Activated B cell treated with CpG ODN at 0.5 μM for 24 hours (primary cell): ENCODE measurements at regions of chr1 and their contacts with region 1.

Region 1: DNA sequence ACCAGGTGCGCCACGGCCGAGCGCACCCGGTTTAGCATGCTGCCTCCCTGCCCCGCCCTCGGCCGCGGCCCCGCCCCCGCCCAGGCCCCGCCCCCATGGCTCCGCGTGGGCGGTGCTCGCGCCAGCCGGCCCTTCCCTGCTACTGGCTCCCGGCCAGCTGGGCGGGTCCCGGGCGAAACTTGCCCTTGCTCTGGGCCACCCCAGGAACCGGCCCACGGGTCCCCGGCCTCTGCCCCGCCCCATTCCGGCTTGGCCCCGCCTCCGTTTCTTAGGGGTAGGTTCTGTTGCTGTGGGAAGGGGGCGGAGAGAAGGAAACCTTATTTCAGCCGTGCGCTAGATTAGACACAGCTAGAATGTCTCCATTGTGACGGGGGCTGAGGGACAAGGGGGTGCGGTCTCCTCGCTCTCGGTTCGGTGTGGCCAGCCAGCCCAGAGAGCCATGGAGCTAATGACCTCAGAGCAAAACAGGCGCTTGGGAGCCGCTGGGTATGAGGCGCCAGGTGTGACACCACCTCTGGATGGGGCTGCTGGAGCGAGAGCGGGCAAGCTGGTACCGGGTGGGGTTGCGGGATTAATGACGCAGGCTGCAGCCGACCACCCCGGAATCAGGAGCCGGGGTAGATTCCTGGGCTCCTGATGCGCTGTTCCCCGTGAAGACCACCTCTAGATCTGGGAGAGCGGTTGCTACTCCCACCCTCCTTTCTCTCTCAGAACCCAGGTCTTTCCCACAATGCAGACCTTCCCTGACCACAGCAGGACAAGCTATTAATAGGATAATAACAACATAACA is at the start of gene PPM1J:
- DNase-seq: peak; percentile 99
- ATAC-seq: peak; percentile 88
- H3K4me3 Mint-ChIP-seq: peak within 1 kb of the TSS; percentile 84
- H3K27ac Mint-ChIP-seq: peak within 1 kb of the TSS; percentile 74
- H3K4me1 Mint-ChIP-seq: peaks cover 37% of the 10 kb centered on the region
- H3K27me3 Mint-ChIP-seq: peaks cover 5% of the 10 kb centered on the region
- CTCF ChIP-seq: no peak
- total RNA-seq, gene PPM1J: 0.46 and 0.75 TPM in 2 replicates

Region 2: DNA sequence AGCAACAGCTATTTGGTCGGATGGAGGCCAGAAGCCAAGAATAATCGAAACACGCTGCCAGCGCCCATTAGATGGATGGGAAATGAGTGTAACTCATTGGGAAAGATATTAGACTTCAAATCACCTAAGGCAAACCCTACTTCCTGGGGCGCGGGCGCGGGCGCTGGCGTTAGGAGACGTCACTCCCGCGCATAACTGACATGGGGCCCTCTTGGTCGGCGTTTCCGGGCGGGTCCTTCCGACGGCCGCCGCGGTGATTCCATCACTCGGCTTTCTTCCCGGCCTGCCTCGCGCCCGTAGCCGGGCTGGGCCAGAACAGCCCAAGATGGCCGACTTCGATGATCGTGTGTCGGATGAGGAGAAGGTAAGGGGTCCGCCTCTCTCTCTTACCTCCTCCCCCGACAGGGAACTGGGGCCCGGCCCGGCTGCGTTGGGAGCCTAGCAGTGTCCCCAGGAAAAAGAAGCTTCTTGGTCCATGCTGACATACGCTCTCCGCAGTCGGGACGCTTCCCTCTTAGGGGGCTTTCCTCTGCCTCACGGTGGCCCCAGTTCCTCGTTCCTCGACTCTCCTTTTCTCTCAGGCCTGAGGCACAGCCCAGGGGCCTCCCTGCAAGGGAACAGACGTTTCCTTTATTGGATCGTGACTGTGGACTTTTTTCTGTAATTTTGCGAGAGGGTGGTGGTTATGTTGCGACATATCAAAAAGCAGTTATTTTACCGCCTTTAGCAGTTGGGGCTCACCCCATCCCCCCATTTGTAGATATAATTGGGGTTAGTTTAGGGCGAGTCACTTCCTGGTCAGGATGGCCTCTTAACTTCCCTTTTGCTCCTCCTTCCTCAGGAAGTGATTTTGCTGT is 95.7 kb before region 1 on chr1 and contains the start of gene CAPZA1:
- CTCF ChIA-PET with region 1: interaction called, 4 read pairs
- POLR2A ChIA-PET with region 1: interaction called, 31 read pairs
- intact Hi-C with region 1: loop called (anchors 1 kb)
- DNase-seq: peak; percentile 82
- ATAC-seq: peak; percentile 83
- H3K4me3 Mint-ChIP-seq: peak within 1 kb of the TSS; percentile 97
- H3K27ac Mint-ChIP-seq: peak within 1 kb of the TSS; percentile 99
- H3K4me1 Mint-ChIP-seq: peaks cover 54% of the 10 kb centered on the region
- H3K27me3 Mint-ChIP-seq: no peaks in the 10 kb centered on the region
- CTCF ChIP-seq: no peak
- total RNA-seq, gene CAPZA1: 221 and 227 TPM in 2 replicates

Region 3: DNA sequence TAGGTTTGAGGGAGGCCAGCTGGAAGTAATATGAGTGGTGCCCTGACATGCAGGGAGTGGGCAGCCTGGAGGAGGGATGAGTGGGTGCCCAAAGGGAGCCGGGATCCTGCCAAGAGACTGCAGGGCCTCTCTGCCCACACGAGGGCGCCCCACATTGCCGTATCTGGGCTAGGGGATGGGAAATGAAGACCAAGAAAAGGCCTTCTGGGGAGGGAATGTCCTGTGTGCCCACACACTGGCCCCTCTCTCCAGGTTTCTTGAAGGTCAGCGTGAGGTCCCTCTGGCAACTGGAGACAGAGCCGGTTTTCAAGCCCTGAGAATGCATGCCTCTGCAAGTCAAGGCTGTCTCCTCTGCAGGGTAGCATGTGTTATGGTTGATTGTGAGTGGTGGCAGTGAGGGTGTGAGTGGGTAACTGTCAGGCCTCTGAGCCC is 93.8 kb after region 1 on chr1:
- CTCF ChIA-PET with region 1: interaction called, 59 read pairs
- POLR2A ChIA-PET with region 1: no interaction called
- intact Hi-C with region 1: loop called (anchors 1 kb)
- DNase-seq: peak; percentile 53
- ATAC-seq: peak; percentile 75
- H3K4me3 Mint-ChIP-seq: no peak overlapping the region
- H3K27ac Mint-ChIP-seq: no peak overlapping the region
- H3K4me1 Mint-ChIP-seq: no peaks in the 10 kb centered on the region
- H3K27me3 Mint-ChIP-seq: peaks cover 2% of the 10 kb centered on the region
- CTCF ChIP-seq: peak; percentile 15

Region 4: DNA sequence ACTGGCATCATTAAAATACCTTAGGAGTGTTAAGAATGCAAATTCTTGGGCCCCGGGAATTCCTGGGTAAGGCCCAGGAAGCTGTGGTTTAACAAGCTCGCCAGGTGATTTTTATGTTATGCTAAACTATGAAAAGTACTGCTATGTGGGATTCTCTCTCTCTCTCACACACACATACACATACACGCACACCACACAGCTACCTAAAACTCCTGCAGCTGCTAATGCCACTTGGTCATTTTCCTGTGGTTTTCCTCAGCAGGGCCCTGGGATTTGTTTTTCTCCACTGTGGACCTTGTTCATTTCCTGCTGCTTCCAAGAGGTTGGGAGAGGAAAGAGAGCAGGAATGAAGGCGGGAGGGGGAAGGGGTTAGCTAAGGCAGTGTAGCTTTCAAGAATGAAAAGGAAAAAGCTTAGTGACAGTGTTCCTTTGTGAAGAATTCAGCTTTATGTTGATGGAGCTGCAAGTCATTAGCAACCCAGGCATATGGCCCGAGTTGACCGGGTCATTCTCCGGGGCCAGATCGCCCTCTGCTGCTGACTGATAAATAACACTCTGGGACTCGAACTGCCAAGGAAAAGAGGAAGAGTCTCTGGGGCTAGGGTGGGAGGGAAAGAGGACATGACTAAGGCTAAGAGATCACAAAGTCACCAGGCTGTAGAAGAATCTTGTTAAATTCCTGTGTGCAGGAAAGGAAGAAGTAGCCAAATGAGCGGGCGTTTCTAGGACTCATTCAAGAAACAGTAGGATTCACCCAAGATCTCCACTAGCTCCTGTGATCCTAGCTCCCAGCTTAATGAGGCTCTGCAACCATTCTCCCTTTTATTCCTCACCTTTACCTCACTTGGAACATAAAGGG is 327.1 kb after region 1 on chr1:
- CTCF ChIA-PET with region 1: interaction called, 24 read pairs
- POLR2A ChIA-PET with region 1: no interaction called
- intact Hi-C with region 1: loop called (anchors 1 kb)
- DNase-seq: peak; percentile 20
- ATAC-seq: peak; percentile 77
- H3K4me3 Mint-ChIP-seq: peak overlapping the region; percentile 46
- H3K27ac Mint-ChIP-seq: peak overlapping the region; percentile 30
- H3K4me1 Mint-ChIP-seq: peaks cover 27% of the 10 kb centered on the region
- H3K27me3 Mint-ChIP-seq: peaks cover 6% of the 10 kb centered on the region
- CTCF ChIP-seq: no peak

Region 5: GRCh38 chr1:113389953-113390834 is 674.7 kb after region 1 on chr1 and contains the start of gene MAGI3:
- CTCF ChIA-PET with region 1: no interaction called
- POLR2A ChIA-PET with region 1: no interaction called
- intact Hi-C with region 1: loop called (anchors 5 kb)
- DNase-seq: peak; percentile 83
- ATAC-seq: peak; percentile 98
- H3K4me3 Mint-ChIP-seq: peak within 1 kb of the TSS; percentile 95
- H3K27ac Mint-ChIP-seq: peak within 1 kb of the TSS; percentile 77
- H3K4me1 Mint-ChIP-seq: peaks cover 18% of the 10 kb centered on the region
- H3K27me3 Mint-ChIP-seq: peaks cover 29% of the 10 kb centered on the region
- CTCF ChIP-seq: no peak
- total RNA-seq, gene MAGI3: 0.83 and 1.0 TPM in 2 replicates

Region 6: GRCh38 chr1:113759333-113760101 is 1044.1 kb after region 1 on chr1 and contains the start of gene PHTF1:
- CTCF ChIA-PET with region 1: no interaction called
- POLR2A ChIA-PET with region 1: interaction called, 7 read pairs
- intact Hi-C with region 1: loop called (anchors 1 kb)
- DNase-seq: peak; percentile 73
- ATAC-seq: peak; percentile 88
- H3K4me3 Mint-ChIP-seq: peak within 1 kb of the TSS; percentile 94
- H3K27ac Mint-ChIP-seq: peak within 1 kb of the TSS; percentile 98
- H3K4me1 Mint-ChIP-seq: peaks cover 21% of the 10 kb centered on the region
- H3K27me3 Mint-ChIP-seq: no peaks in the 10 kb centered on the region
- CTCF ChIP-seq: no peak
- total RNA-seq, gene PHTF1: 19.2 and 25.0 TPM in 2 replicates